ENCODE measurements at regions of chr12 and their contacts with region 1.

Region 1: GRCh38 chr12:57430931-57431720 is at the start of gene R3HDM2:
- DNase-seq: peak; percentile 95 to 98 (median 96)
- H3K4me3 ChIP-seq: peak within 1 kb of the TSS; percentile 66
- H3K27ac ChIP-seq: peak within 1 kb of the TSS; percentile 89 to 96
- H3K4me1 ChIP-seq: peaks cover 3% of the 10 kb centered on the region
- H3K27me3 ChIP-seq: no peaks in the 10 kb centered on the region
- CTCF ChIP-seq: no peak
- EP300 ChIP-seq: peak; percentile 22
- POLR2A ChIP-seq: peak; percentile 95
- total RNA-seq, gene R3HDM2: 24.3 to 81.4 (median 65.6) TPM

Region 2: DNA sequence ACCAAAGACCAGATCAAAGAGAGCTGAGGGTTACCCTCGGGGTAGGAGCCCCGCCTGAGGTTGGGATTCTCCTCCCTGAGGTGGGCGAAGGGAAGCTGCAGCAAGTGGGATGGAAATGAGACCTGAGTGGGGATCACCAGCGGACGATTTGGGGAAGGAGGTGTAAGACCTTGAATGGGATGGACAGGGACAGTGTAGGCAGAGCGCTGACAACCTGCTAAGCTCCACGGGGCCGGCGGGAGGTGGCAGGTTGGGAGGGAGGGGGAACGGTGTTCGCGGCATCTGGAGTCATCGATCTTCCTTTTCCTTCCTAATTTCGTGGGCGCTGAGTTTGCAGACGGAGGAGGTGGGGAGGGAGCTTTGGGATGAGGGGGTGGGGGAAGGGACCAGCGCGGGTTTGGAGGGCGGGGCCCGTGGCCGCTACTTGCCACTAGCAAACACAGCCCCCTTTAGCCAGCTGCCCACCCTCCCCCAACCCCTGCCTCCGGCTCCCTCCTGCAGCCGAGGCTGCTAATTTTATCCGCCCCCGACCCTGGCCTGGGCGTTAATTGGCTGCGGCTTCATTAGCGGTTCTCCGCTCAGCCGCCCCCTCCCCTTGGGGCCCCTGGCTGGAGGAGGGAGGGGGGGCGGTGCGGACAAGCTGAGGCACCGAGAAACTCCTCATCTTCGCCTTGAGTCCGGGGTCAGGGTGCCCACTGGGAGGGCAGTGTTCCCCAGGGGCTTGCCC is 204.4 kb before region 1 on chr12:
- intact Hi-C with region 1: loop called in 1 of 4 experiments (anchors 1 kb)
- DNase-seq: no peak
- H3K4me3 ChIP-seq: no peak overlapping the region
- H3K27ac ChIP-seq: no peak overlapping the region
- H3K4me1 ChIP-seq: peaks cover 7% of the 10 kb centered on the region
- H3K27me3 ChIP-seq: peaks cover 3% of the 10 kb centered on the region
- CTCF ChIP-seq: no peak
- EP300 ChIP-seq: no peak
- POLR2A ChIP-seq: no peak

Region 3: GRCh38 chr12:57268264-57268663 is 162.9 kb before region 1 on chr12:
- intact Hi-C with region 1: loop called in 1 of 4 experiments (anchors 5 kb)
- DNase-seq: no peak
- H3K4me3 ChIP-seq: no peak overlapping the region
- H3K27ac ChIP-seq: no peak overlapping the region
- H3K4me1 ChIP-seq: peaks cover 5% of the 10 kb centered on the region
- H3K27me3 ChIP-seq: no peaks in the 10 kb centered on the region
- CTCF ChIP-seq: no peak
- EP300 ChIP-seq: no peak
- POLR2A ChIP-seq: no peak

Measured in ovary (tissue), 10 donors.